Activated T-helper 1 cell treated with anti-CD3 and anti-CD28 coated beads, Interleukin-12 subunit alpha, Interleukin-12 subunit beta, Interleukin-2, Interleukin-4 antibody, amounts not matched to agents 30 ng/mL and 10 ng/mL and 1 ng/mL, durations not matched to agents 14 hours and 24 hours and 36 hours (primary cell): ENCODE measurements at regions of chr2 and their contacts with region 1.

Region 1: DNA sequence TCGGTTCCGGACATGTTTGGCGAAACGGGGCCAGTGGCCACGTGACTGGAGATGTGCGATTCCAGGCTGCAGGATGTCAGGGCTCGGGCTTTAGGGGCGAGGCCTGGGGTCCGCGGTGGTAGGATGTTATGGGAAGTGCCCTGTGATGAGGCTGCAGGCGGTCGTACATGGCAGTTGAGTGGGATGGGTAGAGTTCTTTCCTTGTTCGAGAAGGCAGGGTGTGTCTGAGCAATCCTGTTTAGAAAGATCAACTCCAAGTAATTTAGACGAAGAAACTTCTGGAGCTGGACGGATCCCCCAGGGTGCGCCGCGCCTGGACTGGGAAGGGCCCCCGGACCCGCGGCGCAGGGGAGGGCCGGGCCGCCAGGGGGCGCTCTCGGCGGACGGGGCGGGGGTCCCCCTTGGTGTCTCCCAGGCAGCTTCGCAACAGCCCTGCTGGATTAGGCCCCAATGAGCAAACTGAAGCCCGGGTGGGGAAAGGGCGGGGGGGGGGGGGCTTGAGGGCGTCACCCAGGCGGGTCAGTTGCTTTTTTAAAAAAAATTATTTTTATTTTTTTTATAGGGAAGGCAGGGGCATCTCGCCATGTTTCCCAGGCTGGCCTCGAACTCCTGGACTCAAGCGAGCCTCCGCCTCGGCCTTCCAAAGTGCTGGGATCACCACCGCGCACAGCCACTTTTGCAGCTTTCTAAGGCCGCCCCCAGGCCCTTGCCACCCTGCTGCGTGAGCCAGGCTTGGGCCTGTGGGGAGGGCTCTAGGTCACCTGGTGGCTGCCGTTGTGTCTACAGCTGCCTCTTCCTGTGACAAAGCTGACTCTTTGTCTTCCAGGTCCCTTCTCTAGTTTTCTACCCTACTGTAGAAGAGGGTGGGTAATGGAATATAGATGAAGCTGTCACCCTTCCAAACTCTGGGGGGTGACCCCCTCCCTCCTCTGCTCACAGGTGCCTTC is 17.4 kb upstream of the SDC1 start:
- DNase-seq: peak; percentile 20
- H3K4me3 Mint-ChIP-seq: no peak overlapping the region
- H3K27ac Mint-ChIP-seq: no peak overlapping the region
- H3K4me1 Mint-ChIP-seq: no peaks in the 10 kb centered on the region
- H3K27me3 Mint-ChIP-seq: peaks cover 4% of the 10 kb centered on the region

Region 2: DNA sequence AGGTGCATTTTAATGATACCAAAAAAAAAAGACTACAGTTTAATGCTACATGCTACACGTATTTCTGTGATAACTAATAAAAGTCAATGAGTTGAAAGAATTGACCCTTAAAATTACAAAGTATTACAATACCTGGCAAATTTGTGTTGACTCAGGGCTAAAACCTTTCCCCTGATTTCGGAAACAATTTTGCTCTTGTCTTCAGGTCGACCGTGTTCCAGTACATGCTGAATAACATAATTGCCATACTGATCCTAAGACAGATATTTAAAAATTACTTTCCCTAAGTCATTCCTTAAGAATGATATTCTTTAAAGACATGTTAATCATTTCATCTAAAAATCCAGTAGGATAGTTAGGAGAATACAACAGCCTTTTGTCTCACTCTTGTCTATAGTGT is 12.4 kb after region 1 on chr2:
- intact Hi-C with region 1: no loop called
- DNase-seq: no peak
- H3K4me3 Mint-ChIP-seq: no peak overlapping the region
- H3K27ac Mint-ChIP-seq: no peak overlapping the region
- H3K4me1 Mint-ChIP-seq: no peaks in the 10 kb centered on the region
- H3K27me3 Mint-ChIP-seq: no peaks in the 10 kb centered on the region

Region 3: DNA sequence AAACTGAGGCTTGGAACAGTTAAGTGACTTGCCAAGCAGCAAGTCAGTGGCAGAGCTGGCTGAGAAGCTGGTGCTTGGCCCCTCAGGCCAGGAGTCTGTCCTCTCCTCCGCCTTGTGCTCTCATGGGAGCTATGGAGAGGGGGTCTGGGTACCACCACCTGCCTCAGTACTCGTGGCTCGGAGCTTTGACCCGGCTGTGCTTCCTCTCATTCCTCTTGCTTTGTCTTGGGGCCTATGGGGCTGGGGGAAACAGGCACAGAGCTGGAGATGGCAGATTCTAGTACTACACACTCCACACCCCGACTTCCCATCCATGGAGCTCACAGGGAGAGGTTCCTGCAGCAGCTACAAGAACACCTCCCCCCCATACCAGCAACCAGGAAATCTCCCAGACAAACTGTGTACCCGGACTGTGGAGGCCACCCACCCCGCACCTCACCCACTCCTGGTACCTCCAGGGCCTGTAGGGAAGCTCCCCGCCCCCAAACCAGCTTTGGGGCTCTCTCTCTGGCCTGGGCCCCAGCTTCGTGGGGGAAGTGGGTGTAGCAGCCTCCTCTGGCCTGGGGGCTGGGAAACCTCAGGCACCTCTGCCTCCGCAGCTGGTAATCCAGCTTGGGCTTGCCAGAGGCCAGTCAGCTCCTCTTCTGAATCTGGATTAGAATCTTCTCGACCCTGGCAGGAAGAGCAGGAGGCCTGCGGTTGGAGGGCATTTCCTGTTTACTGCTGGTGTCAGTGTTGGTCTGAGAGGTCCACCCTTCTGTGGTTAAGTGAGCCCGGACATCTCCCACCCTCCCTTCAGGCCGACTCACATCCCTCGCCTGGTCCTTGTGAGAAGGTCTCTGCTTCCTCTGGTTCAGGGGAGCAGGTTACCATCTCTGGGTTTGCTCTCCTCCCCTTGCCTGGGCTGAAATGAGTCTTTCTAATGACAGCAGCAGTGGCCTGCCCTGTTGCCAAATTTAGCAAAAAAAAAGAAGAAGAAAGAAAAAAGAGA is 182.3 kb after region 1 on chr2:
- intact Hi-C with region 1: loop called (anchors 1 kb)
- DNase-seq: no peak
- H3K4me3 Mint-ChIP-seq: peak overlapping the region; percentile 60
- H3K27ac Mint-ChIP-seq: peak overlapping the region; percentile 86
- H3K4me1 Mint-ChIP-seq: peaks cover 32% of the 10 kb centered on the region
- H3K27me3 Mint-ChIP-seq: no peaks in the 10 kb centered on the region

Region 4: DNA sequence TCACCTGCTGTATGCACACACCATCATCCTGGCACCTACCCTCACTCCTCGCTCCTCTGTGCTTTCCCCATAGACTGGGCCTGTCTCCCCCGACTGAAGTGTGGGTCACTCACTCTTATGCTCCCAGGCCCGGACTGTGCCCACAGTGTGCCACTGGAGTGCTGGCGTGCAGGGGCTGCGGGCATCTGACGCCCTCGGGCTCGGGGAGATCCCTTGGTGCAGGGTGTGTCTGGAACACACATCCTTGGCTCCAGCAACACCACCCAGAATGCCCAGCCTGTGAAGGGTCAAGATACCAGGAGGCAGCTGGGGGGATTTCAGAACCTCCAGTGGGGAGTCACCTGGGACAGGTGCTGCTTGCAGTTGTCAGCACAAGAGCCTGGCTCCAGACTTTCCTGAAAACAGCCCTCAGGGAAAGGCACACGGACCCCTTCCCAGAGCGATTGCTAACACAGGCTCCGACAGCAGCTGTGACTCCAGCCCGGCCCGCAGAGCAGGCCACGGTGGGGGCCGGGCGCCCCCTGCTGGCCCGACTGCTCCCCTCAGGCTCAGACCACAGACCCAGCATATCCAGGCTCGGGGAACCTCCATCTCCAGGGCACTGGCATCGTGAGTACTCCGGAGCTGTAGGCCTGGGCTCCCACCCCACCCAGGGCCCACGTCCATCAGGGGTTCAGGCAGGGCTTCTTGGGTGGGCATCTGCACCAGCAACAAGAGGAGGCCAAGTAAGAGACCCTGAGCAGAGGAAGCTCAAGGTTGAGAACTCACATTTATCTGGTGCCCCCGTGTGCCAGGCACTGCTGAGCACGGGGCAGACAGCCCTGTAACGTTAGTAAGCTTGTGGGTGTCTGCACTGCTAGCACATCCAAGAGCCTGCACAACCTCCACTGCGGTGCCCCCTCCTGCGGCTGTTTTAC is 400.0 kb after region 1 on chr2:
- intact Hi-C with region 1: loop called (anchors 2 kb)
- DNase-seq: peak; percentile 62
- H3K4me3 Mint-ChIP-seq: no peak overlapping the region
- H3K27ac Mint-ChIP-seq: no peak overlapping the region
- H3K4me1 Mint-ChIP-seq: no peaks in the 10 kb centered on the region
- H3K27me3 Mint-ChIP-seq: no peaks in the 10 kb centered on the region